ENCODE measurements at regions of chr10 and their contacts with region 1.

Region 1: DNA sequence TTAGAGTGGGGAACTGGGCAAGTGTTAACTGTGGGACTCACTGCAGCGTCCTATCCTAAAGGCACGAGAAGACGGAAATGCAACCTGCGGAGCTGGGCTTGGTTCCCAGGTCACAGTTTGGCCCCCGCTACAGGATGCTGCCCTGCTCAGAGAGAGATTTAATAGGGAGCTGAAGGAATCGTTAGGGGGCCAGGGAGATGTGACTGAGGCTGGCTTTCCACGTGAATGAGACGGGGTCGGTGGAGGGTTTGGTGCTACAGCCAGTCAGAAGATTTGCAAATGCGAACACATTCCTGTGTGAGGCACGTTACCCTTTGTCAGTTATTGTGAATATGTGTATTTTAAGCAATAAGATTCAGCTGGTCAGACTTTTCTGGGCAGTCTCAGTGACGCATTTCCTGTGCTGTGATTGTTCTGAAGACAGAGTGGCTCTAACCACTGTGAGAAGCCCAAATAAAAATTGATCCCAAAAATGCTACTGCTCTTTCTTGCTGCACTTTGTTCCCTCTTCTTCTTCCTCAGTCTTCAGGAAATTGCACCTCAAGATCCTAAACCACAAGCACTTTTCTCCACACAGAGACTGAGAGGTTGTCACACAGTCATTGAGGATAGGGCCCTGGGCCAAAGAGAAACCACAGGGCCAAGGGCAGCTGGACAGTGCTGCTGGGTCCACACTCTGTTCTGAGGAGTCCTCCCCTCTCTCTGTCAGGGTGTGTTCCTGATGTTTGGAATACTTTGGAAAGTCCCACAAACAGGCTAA is 21.2 kb downstream of the CYP17A1 start:
- DNase-seq: no peak

Region 2: DNA sequence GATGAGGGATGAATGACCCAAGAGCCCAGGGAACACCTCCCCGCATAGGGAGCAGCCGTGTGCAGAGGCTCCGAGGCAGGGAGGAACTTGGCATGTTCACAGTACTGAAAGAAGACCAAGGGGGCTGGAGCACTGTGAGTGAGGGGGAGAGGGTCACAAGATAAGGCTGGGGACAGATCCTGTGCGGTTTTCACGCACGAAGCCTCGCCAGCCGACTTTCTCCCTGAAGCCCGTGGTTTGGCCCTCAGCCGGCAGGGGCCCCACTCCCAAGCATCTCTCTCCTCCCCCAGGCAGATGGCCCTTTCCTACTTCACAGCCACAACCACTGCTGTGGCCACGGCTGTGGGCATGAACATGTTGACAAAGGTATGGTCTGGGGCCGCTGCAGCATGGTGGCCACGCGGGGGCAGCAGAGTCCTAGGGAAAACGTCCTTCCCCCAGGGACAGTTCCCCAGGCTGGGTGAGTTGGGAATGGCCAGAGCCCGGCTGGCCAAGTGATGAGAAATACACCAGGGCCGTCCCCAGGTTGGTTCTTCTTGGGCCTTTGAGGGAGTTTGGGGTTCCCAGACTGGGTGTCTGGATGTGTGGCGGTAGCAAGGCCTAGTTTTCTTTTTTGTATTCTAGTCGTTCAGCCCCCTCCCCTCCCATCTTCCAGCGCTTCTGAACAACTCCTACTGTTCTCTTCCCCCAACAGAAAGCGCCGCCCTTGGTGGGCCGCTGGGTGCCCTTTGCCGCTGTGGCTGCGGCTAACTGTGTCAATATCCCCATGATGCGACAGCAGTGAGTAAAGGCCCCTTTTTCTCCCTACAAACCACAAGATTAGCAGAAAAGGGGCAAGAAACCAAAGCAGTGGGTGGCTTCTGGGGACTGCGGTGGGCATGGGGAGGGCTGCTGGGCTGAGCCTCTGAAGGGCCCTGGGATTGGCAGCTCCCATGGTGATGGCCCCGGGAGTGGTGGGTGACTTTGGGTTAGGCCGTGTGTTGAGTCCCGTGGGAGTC is 86.6 kb before region 1 on chr10:
- intact Hi-C with region 1: loop called in 1 of 2 experiments (anchors 10 kb)
- DNase-seq: peak; percentile 97

Region 3: GRCh38 chr10:102744374-102745051 is 71.5 kb before region 1 on chr10:
- intact Hi-C with region 1: loop called (anchors 5 to 10 kb)
- DNase-seq: no peak

Region 4: GRCh38 chr10:102927311-102928010 is 111.5 kb after region 1 on chr10:
- intact Hi-C with region 1: no loop called
- DNase-seq: no peak

Measured in posterior vena cava (tissue), 2 donors.